ENCODE measurements at regions of chr4 and their contacts with region 1.

Region 1: DNA sequence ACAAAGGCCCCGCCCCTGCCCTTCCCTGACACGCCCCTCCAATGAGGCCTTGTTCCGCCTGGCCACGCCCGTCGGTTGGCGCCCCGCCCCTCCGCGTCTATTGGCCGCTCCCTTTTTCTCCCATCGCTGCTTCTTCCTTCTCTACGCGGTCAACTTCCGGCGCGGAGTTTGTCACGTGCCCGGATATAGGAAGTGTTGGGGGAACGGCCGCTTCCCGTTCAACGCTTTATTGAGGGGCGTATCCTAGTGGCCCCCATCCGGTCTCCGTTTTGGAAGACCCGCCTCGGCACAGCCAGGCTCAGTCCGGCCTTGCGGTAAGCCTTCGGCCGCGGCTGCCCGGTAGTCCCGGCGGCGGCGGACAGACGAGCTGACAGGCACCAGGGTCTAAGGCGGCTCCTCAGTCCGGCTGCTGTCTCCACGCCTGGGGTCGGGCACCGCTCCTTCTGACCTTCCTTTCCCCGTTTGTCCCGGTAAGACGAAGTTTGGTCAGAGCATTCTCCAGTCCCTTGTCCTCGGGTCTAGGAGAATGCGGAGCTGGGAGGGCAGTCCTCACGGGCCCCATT is at the start of gene EXOC1:
- DNase-seq: peak; percentile 94
- H3K4me3 Mint-ChIP-seq: peak within 1 kb of the TSS; percentile 18
- H3K27ac Mint-ChIP-seq: peak within 1 kb of the TSS; percentile 89
- H3K4me1 Mint-ChIP-seq: peaks cover 20% of the 10 kb centered on the region
- H3K27me3 Mint-ChIP-seq: no peaks in the 10 kb centered on the region
- total RNA-seq, gene EXOC1: 20.4 and 22.2 TPM in 2 replicates

Region 2: GRCh38 chr4:55345980-55346850 is 507.4 kb before region 1 on chr4 and contains the start of gene SRD5A3:
- intact Hi-C with region 1: loop called (anchors 5 kb)
- DNase-seq: peak; percentile 72
- H3K4me3 Mint-ChIP-seq: peak within 1 kb of the TSS; percentile 90
- H3K27ac Mint-ChIP-seq: peak within 1 kb of the TSS; percentile 95
- H3K4me1 Mint-ChIP-seq: peaks cover 29% of the 10 kb centered on the region
- H3K27me3 Mint-ChIP-seq: no peaks in the 10 kb centered on the region
- total RNA-seq, gene SRD5A3: 32.4 and 33.5 TPM in 2 replicates

Region 3: DNA sequence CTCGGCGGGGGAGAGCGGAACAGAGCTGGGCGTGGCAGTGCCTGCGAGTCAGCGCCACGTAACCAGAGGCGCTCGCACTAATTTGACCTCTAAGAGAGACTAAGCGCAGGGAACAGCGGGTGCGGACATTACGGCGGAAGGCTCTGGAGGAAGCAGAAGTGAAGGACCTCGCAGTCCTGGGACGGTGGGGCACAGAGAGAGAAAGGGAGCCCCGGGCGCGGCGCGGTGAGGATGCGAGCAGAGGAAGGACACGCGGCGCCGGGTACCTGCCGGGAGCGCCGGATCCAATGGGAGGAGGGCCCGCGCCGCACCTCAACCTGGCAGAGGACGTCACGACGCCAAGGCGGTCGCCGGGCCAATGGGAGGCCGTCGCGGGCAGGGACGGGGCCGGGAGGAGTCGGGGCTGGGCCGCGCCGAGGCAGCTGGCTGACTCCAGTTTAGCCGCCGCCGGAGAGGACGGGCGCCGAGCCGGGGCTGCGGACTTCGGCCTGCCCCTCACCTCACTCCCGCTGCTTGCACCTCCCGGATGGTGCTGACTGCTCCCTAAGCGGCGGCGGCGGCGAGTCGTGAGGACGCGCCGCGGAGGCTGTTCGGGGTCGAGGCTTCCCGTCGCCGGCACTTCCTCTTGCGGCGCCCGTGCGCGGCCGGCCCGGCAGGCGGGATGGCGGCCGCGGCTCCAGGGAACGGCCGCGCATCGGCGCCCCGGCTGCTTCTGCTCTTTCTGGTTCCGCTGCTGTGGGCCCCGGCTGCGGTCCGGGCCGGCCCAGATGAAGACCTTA is 457.8 kb before region 1 on chr4 and contains the start of gene TMEM165:
- intact Hi-C with region 1: loop called (anchors 5 kb)
- DNase-seq: peak; percentile 86
- H3K4me3 Mint-ChIP-seq: peak within 1 kb of the TSS; percentile 98
- H3K27ac Mint-ChIP-seq: peak within 1 kb of the TSS; percentile 97
- H3K4me1 Mint-ChIP-seq: peaks cover 31% of the 10 kb centered on the region
- H3K27me3 Mint-ChIP-seq: no peaks in the 10 kb centered on the region
- total RNA-seq, gene TMEM165: 89.3 and 91.4 TPM in 2 replicates

Region 4: GRCh38 chr4:55706541-55706940 is 147.0 kb before region 1 on chr4:
- intact Hi-C with region 1: no loop called
- DNase-seq: no peak
- H3K4me3 Mint-ChIP-seq: no peak overlapping the region
- H3K27ac Mint-ChIP-seq: no peak overlapping the region
- H3K4me1 Mint-ChIP-seq: no peaks in the 10 kb centered on the region
- H3K27me3 Mint-ChIP-seq: peaks cover 2% of the 10 kb centered on the region

Region 5: DNA sequence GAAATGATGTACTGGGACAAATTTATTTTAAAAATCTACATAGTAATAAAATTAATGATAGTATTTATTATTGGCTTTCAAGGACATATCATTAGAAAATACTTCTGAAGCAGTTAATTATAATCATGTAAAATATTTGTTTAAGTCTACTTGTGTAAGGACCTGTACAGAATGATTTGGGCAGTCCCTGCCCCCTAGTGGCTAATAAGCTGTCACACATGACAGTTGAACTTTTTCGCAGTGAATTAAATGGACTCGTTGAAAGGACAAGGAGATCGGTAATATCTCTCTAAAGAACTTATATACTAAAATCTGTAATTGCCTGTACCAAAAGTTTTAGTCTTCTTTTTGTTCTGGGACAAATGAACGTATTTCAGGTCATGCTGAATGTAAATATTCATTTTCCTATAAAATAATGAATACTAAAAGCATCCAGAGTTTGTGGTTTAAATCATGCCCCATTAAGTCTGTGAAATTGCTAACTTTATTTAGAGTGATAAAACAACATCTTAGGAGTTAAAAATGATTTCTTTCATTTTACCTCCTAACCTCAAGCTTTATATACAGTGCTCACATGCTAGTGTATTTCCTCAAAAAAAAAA is 13.5 kb after region 1 on chr4:
- intact Hi-C with region 1: loop called (anchors 1 kb)
- DNase-seq: no peak
- H3K4me3 Mint-ChIP-seq: no peak overlapping the region
- H3K27ac Mint-ChIP-seq: no peak overlapping the region
- H3K4me1 Mint-ChIP-seq: peaks cover 23% of the 10 kb centered on the region
- H3K27me3 Mint-ChIP-seq: no peaks in the 10 kb centered on the region

Region 6: GRCh38 chr4:55906999-55907398 is 53.4 kb after region 1 on chr4:
- intact Hi-C with region 1: loop called (anchors 1 kb)
- DNase-seq: no peak
- H3K4me3 Mint-ChIP-seq: no peak overlapping the region
- H3K27ac Mint-ChIP-seq: peak overlapping the region; percentile 46
- H3K4me1 Mint-ChIP-seq: peaks cover 24% of the 10 kb centered on the region
- H3K27me3 Mint-ChIP-seq: no peaks in the 10 kb centered on the region

Region 7: GRCh38 chr4:56414135-56414670 is 560.6 kb after region 1 on chr4:
- intact Hi-C with region 1: no loop called
- DNase-seq: no peak
- H3K4me3 Mint-ChIP-seq: no peak overlapping the region
- H3K27ac Mint-ChIP-seq: no peak overlapping the region
- H3K4me1 Mint-ChIP-seq: peaks cover 18% of the 10 kb centered on the region
- H3K27me3 Mint-ChIP-seq: no peaks in the 10 kb centered on the region